Left colon (tissue), 2 donors: ENCODE measurements at regions of chr19 and their contacts with region 1.

Region 1: DNA sequence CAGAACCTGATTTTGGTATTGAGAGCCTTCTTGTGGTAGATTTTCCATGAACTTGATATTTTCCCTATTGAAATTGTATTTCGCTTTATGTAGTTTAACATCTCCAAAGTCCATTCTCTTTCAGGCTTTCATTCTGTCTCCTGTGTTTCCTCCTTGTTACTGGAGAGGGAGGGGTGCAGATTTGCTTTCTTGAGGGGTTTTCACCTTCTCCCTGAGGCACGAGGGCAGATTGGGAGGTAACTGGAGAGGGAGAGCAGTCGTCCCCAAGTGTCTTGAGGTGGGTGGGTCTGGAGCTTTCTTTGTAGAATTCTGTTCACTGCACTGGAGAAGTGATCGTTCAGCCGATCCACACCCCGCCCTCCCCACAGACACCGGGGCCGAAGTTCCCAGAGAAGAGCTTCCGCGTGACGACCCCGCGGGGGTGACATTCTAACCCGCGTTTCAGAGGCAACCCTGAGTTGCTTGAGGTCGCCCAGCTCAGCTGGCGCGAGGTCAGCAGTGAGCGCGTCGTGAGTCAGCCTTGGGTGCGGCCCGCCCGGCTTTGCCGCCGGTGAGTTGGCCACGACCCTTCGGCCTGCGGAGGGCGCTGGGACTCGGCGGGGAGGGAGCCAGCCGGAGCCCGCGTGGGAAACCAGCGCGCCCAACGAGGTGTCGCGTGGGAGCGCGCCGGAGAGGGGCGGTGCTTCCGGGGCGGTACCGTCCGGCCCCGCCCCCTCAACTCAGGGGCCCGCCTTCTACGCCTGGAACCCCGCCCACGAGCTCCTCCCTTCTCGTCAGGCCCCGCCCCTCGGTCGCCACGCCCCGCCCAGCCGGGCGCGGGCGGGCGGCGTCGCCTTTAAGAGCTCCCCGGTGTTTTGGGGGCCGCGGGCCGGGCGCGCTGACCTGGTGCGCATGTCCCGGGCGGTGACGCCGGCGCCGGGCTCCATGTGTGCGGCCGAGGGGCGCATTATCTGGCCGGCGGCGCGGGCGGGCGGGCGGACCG is at the start of gene GATAD2A:
- DNase-seq: peak; percentile 90 to 96
- ATAC-seq: peak; percentile 85
- total RNA-seq, gene GATAD2A: 104 to 135 TPM

Region 2: DNA sequence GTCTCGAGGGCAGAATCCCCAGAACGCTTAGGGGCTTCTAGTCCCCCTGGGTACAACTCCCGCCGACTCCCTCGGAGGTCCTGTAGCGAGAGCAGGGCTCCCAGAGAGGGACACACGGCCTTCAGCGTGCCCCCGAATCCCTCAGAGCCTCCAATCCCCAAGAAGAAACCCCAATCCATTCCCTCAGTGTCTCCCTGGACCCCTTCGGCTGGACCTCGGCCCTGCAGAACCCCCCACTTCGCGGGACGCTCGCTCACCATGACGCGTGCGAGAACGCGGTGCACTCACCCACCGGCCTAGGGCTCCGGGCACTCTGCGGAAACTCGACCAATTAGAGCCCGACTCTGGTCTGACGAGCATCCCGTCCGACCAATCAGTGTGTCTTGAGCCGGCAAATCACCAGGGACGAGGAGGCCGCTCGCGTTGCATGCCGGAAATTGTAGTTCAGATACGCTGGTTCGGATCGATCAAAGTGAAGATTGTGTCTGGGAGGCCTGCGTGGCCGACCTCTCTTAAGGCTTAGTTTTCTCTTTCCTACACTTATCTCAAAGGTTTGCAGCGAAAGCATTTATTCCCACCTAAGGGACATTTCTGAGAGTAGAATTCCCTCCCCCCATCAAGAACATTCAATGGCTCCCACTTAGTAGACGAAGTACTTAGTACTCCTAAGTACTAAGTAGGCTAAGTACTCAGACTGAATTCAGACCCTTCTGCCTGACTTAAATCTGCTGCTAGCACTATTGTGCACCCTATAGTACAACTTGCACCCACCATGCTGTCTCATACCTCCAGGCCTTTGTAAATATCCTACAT is 266.8 kb before region 1 on chr19 and contains the start of gene TMEM161A:
- intact Hi-C with region 1: no loop called
- DNase-seq: peak; percentile 96 to 98
- ATAC-seq: peak; percentile 99
- total RNA-seq, gene TMEM161A: 16.8 to 18.9 TPM

Region 3: GRCh38 chr19:19192078-19192882 is 212.9 kb before region 1 on chr19 and contains the starts of genes BORCS8 and RFXANK:
- intact Hi-C with region 1: loop called in 1 of 2 experiments (anchors 5 kb)
- DNase-seq: peak; percentile 99 to 100
- ATAC-seq: peak; percentile 92
- total RNA-seq, gene BORCS8: 27.9 to 28.4 TPM
- total RNA-seq, gene RFXANK: 60.3 to 73.7 TPM

Region 4: DNA sequence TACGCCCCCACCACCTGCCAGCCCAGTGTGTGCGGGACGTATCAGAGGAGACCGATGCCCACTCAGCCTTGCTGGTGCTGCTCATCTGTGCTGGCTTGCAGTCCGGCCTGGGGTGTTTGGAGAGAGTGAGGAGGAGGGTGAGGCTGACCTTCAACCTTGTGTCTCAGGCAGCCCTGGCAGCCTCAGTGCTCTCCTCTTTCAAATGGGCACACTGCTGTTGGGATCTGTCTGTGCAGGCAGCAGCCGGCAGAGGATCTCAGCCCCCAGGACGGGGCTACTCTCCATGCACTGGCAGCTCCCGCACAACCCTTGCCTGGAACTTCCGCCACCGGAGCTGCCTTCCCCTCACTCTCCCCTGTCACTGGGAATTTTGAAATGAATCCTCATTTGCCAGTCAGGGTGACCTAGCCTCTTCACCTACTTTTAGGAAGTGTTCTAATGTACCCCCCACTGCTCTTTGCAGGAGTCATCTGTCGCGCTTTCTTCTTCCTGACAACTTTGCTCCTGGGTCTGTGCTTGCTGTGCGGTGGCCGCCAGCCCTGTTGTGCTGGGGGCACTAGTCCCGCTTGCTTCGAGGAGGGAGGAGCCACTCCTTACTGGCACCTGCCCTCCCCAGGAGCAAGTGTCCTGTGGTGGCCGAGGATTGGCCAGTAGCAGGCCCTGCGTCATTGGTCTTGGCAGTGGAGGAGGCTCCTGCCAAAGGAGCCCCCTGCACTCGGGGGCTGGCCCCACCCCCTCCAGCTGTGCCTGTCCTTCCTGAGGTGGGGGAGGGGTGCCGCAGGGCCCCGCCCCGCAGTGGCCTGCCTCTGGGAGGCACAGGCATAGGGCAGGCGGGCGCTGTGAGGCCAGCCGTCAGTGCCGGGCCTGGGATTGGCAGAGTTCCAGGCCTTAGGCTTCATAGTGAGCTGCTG is 56.8 kb after region 1 on chr19:
- intact Hi-C with region 1: no loop called
- DNase-seq: peak; percentile 76 to 77
- ATAC-seq: peak; percentile 83